ENCODE measurements at regions of chr15 and their contacts with region 1.

Region 1: GRCh38 chr15:56821721-56822425 is 88.6 kb upstream of the ZNF280D start:
- DNase-seq: peak; percentile 77
- H3K4me3 ChIP-seq: no peak overlapping the region
- H3K27ac ChIP-seq: no peak overlapping the region
- H3K4me1 ChIP-seq: peaks cover 18% of the 10 kb centered on the region
- H3K27me3 ChIP-seq: peaks cover 0 to 3% of the 10 kb centered on the region in 2 experiments
- CTCF ChIP-seq: peak; percentile 65 to 74
- POLR2A ChIP-seq: no peak

Region 2: DNA sequence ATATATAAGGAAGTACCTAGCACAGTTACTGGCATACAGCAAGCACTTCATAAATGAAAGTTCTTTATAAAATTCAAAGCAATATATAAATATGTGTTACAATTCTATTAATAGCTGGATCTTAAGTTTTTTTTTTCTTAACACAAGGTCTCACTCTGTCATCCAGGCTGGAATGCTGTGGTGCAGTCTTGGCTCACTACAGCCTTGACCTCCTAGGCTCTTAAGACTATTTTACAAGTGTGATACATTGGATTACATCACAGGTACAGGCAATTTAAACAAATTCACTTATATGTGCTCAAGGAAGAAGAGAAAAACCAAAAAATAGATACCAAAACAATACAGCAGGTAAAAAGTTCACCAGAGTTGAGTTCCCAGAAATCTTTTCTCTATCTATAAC is 149.2 kb before region 1 on chr15:
- CTCF ChIA-PET with region 1: no interaction called
- POLR2A ChIA-PET with region 1: no interaction called
- dilution Hi-C with region 1: no loop called
- intact Hi-C with region 1: no loop called
- DNase-seq: no peak
- H3K4me3 ChIP-seq: no peak overlapping the region
- H3K27ac ChIP-seq: no peak overlapping the region
- H3K4me1 ChIP-seq: no peaks in the 10 kb centered on the region
- H3K27me3 ChIP-seq: no peaks in the 10 kb centered on the region
- CTCF ChIP-seq: no peak
- POLR2A ChIP-seq: no peak

Region 3: GRCh38 chr15:56835718-56836171 is 13.9 kb after region 1 on chr15:
- CTCF ChIA-PET with region 1: interaction called, 10 read pairs
- POLR2A ChIA-PET with region 1: no interaction called
- dilution Hi-C with region 1: no loop called
- intact Hi-C with region 1: no loop called
- DNase-seq: no peak
- H3K4me3 ChIP-seq: no peak overlapping the region
- H3K27ac ChIP-seq: no peak overlapping the region
- H3K4me1 ChIP-seq: no peaks in the 10 kb centered on the region
- H3K27me3 ChIP-seq: no peaks in the 10 kb centered on the region
- CTCF ChIP-seq: no peak
- POLR2A ChIP-seq: no peak

Region 4: DNA sequence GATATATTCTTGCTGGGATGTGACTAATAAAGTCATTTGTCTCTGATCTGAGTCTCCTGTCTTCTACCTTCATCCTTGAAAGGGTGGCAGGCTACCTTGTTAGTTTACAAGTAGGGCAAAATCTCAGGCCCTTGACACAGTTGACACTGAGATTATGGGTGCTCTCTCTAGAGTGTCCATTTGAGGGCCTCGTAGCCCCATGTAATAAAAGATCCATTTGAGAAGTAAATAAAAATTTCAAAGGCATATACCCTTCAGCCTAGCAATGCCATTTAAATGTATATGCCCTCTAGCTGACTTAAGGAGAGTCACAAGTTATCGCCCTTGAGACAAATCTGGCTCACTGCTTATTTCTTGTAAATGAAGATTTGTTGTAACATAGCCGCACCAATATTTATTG is 195.2 kb after region 1 on chr15:
- CTCF ChIA-PET with region 1: interaction called, 3 read pairs
- POLR2A ChIA-PET with region 1: no interaction called
- dilution Hi-C with region 1: no loop called
- intact Hi-C with region 1: loop called (anchors 10 kb)
- DNase-seq: peak; percentile 44
- H3K4me3 ChIP-seq: no peak overlapping the region
- H3K27ac ChIP-seq: no peak overlapping the region
- H3K4me1 ChIP-seq: peaks cover 6% of the 10 kb centered on the region
- H3K27me3 ChIP-seq: no peaks in the 10 kb centered on the region
- CTCF ChIP-seq: peak in 1 of 2 donors; percentile 12
- POLR2A ChIP-seq: no peak

Region 5: GRCh38 chr15:57213862-57214261 is 392.0 kb after region 1 on chr15:
- CTCF ChIA-PET with region 1: interaction called, 13 read pairs
- POLR2A ChIA-PET with region 1: no interaction called
- dilution Hi-C with region 1: no loop called
- intact Hi-C with region 1: loop called (anchors 2 kb)
- DNase-seq: peak; percentile 76
- H3K4me3 ChIP-seq: no peak overlapping the region
- H3K27ac ChIP-seq: no peak overlapping the region
- H3K4me1 ChIP-seq: peaks cover 17% of the 10 kb centered on the region
- H3K27me3 ChIP-seq: no peaks in the 10 kb centered on the region
- CTCF ChIP-seq: peak; percentile 18 to 24
- POLR2A ChIP-seq: no peak